Right cardiac atrium (tissue), 5 donors: ENCODE measurements at regions of chr1 and their contacts with region 1.

Region 1: GRCh38 chr1:17419626-17420328 is 19.7 kb downstream of the RCC2 start:
- DNase-seq: peak; percentile 72 to 91 (median 91)
- ATAC-seq: peak; percentile 81 to 85
- H3K4me3 ChIP-seq: no peak overlapping the region
- H3K27ac ChIP-seq: no peak overlapping the region
- H3K4me1 ChIP-seq: no peaks in the 10 kb centered on the region
- H3K27me3 ChIP-seq: no peaks in the 10 kb centered on the region

Region 2: GRCh38 chr1:17475729-17476128 is 56.0 kb after region 1 on chr1:
- intact Hi-C with region 1: loop called in 3 of 4 experiments (anchors 10 kb)
- DNase-seq: peak in 1 of 3 donors; percentile 18
- ATAC-seq: peak; percentile 77 to 92
- H3K4me3 ChIP-seq: no peak overlapping the region
- H3K27ac ChIP-seq: no peak overlapping the region
- H3K4me1 ChIP-seq: peaks cover 4% of the 10 kb centered on the region
- H3K27me3 ChIP-seq: no peaks in the 10 kb centered on the region

Region 3: GRCh38 chr1:17485280-17485679 is 65.5 kb after region 1 on chr1:
- intact Hi-C with region 1: loop called in 1 of 4 experiments (anchors 10 kb)
- DNase-seq: peak in 1 of 3 donors; percentile 47
- ATAC-seq: no peak
- H3K4me3 ChIP-seq: no peak overlapping the region
- H3K27ac ChIP-seq: no peak overlapping the region
- H3K4me1 ChIP-seq: no peaks in the 10 kb centered on the region
- H3K27me3 ChIP-seq: no peaks in the 10 kb centered on the region